ENCODE measurements at regions of chr13 and their contacts with region 1.

Region 1: GRCh38 chr13:112641456-112642089 is 48.3 kb upstream of the ATP11A start:
- DNase-seq: no peak
- ATAC-seq: no peak
- H3K4me3 ChIP-seq: no peak overlapping the region
- H3K27ac ChIP-seq: no peak overlapping the region
- H3K4me1 ChIP-seq: 0 out of 3 replicates have a peak, but pooled peaks cover 5% of the 10 kb centered on the region
- CTCF ChIP-seq: no peak
- EP300 ChIP-seq: no peak
- POLR2A ChIP-seq: no peak
- RAD21 ChIP-seq: no peak

Region 2: GRCh38 chr13:112522578-112522977 is 119.0 kb before region 1 on chr13:
- CTCF ChIA-PET with region 1: no interaction called
- POLR2A ChIA-PET with region 1: no interaction called
- DNase-seq: no peak
- ATAC-seq: no peak
- H3K4me3 ChIP-seq: no peak overlapping the region
- H3K27ac ChIP-seq: no peak overlapping the region
- H3K4me1 ChIP-seq: no peaks in the 10 kb centered on the region
- CTCF ChIP-seq: no peak
- EP300 ChIP-seq: no peak
- POLR2A ChIP-seq: no peak
- RAD21 ChIP-seq: no peak

Region 3: GRCh38 chr13:112592647-112593046 is 48.9 kb before region 1 on chr13:
- CTCF ChIA-PET with region 1: no interaction called
- POLR2A ChIA-PET with region 1: no interaction called
- DNase-seq: no peak
- ATAC-seq: no peak
- H3K4me3 ChIP-seq: no peak overlapping the region
- H3K27ac ChIP-seq: no peak overlapping the region
- H3K4me1 ChIP-seq: peaks cover 4% of the 10 kb centered on the region; the same call in 1 of the 3 replicates
- CTCF ChIP-seq: no peak
- EP300 ChIP-seq: no peak
- POLR2A ChIP-seq: no peak
- RAD21 ChIP-seq: no peak

Region 4: DNA sequence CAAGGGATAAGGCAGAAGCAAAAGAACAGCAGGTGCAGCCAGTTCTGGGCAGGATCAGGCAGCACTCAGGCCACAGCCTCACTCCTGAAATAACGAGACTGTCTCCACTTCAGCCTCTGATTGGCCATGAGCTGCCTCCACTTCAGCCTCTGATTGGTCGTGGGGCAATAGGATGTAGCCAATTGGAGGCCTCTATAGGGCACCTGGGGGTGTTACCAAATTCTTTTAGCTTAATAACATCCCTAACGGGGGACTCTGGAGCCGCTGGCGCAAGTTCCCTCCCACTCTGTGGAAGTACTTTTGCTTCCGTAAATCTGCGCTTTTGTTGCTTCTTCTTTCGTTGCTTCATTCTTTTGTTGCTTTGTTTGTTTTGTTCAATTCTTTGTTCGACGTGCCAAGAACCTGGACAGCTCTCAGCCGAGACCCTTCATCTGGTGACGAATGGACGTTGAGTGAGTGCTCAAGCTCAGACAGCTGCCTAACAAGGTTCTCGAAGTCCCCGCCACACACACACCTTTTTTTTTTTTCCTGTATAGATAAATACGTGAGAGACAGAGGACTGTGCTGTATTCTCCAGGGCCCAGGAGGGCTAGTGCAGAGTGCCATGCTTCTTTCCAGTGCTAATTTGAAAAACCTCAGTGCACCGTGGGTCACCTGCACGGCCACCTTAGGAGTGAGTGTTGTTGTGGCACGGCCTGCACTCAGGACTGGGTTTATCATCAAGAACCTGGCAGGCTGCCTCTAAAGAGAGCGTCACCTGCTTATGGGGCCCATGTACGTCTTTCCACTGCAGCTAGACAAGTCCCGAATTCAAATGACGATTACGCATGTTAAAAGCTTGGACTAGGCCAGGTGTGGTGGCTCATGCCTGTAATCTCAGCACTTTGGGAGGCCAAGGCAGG is 21.6 kb before region 1 on chr13:
- CTCF ChIA-PET with region 1: interaction called, 10 read pairs
- POLR2A ChIA-PET with region 1: no interaction called
- DNase-seq: peak in 1 of 2 experiments; percentile 7
- ATAC-seq: peak in 1 of 2 experiments; percentile 66; a peak in 2 of 6 replicates
- H3K4me3 ChIP-seq: no peak overlapping the region
- H3K27ac ChIP-seq: no peak overlapping the region
- H3K4me1 ChIP-seq: no peaks in the 10 kb centered on the region
- CTCF ChIP-seq: no peak
- EP300 ChIP-seq: no peak
- POLR2A ChIP-seq: no peak
- RAD21 ChIP-seq: no peak

Region 5: GRCh38 chr13:112652512-112653070 is 11.0 kb after region 1 on chr13:
- CTCF ChIA-PET with region 1: interaction called, 17 read pairs
- POLR2A ChIA-PET with region 1: no interaction called
- DNase-seq: no peak
- ATAC-seq: no peak
- H3K4me3 ChIP-seq: no peak overlapping the region
- H3K27ac ChIP-seq: no peak overlapping the region
- H3K4me1 ChIP-seq: no peaks in the 10 kb centered on the region
- CTCF ChIP-seq: no peak
- EP300 ChIP-seq: no peak
- POLR2A ChIP-seq: no peak
- RAD21 ChIP-seq: no peak